Colonic mucosa (tissue), 4 donors: ENCODE measurements at regions of chr7 and their contacts with region 1.

Region 1: DNA sequence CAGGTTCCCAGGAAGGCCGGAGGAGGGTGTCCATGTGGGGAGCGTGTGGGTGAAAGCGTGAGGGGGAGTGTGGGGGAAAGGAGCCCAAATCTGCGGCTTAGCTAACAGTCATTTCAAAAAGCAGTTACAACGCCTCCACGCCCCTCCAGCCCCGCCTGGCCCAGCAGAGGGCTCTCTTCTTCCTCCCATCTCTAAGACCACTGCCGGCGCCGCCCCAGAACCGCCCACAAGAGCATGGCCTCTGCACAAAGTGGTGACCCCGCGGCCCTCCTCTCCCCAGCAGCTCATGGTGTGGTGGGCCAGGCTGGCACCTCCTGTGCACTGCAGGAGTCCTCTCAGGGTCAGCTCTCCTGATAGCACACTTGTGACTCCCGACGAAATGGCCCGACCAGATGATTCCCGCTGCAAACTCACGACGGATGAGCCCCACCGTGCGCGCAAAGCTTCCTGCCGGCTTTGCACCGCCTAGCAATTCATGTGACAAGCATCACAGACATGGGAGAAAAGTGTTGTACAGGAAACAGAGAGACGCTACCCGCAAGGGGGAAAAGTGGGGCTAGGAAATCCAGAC is 12.4 kb upstream of the HUS1 start:
- DNase-seq: peak; percentile 90
- H3K4me3 ChIP-seq: peak overlapping the region; percentile 47
- H3K27ac ChIP-seq: peak overlapping the region; percentile 81
- H3K4me1 ChIP-seq: peaks cover 4% of the 10 kb centered on the region
- H3K27me3 ChIP-seq: no peaks in the 10 kb centered on the region
- CTCF ChIP-seq: peak; percentile 46

Region 2: GRCh38 chr7:48074204-48074654 is 82.4 kb after region 1 on chr7:
- intact Hi-C with region 1: no loop called
- DNase-seq: no peak
- H3K4me3 ChIP-seq: no peak overlapping the region
- H3K27ac ChIP-seq: no peak overlapping the region
- H3K4me1 ChIP-seq: no peaks in the 10 kb centered on the region
- H3K27me3 ChIP-seq: no peaks in the 10 kb centered on the region
- CTCF ChIP-seq: no peak

Region 3: GRCh38 chr7:48089046-48090003 is 97.5 kb after region 1 on chr7 and contains the start of gene UPP1:
- intact Hi-C with region 1: loop called (anchors 5 kb)
- DNase-seq: peak; percentile 96
- H3K4me3 ChIP-seq: peak within 1 kb of the TSS; percentile 78
- H3K27ac ChIP-seq: peak within 1 kb of the TSS; percentile 91
- H3K4me1 ChIP-seq: peaks cover 6% of the 10 kb centered on the region
- H3K27me3 ChIP-seq: no peaks in the 10 kb centered on the region
- CTCF ChIP-seq: no peak
- total RNA-seq, gene UPP1: 34.0 to 41.9 TPM